Activated naive CD4-positive, alpha-beta T cell treated with anti-CD3 and anti-CD28 coated beads for 36 hours (primary cell): ENCODE measurements at regions of chr14 and their contacts with region 1.

Region 1: GRCh38 chr14:89303457-89304435 is 113.3 kb downstream of the FOXN3 start:
- DNase-seq: peak; percentile 61
- H3K4me3 Mint-ChIP-seq: peak overlapping the region; percentile 62
- H3K27ac Mint-ChIP-seq: peak overlapping the region; percentile 92
- H3K4me1 Mint-ChIP-seq: peaks cover 67% of the 10 kb centered on the region
- H3K27me3 Mint-ChIP-seq: no peaks in the 10 kb centered on the region

Region 2: DNA sequence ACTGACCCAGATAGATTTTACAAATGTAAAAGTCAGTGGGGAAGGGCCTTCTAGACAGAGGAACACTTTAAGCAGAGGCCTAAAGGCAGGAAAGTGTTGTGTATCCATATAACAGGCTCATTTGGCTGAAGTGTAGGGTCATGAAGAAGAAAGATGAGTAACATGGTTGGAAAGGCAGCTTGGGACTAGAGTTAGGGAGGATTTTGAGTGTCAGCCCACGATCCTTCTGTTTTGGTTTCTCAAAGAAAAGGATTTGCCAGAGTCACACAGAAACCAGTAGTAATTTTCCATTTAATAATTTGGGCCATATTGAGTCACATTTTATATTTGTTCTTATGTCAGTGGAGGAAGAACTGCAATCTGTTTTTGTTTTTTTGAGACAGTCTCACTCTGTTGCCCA is 664.5 kb before region 1 on chr14:
- CTCF ChIA-PET with region 1: no interaction called
- intact Hi-C with region 1: no loop called
- DNase-seq: no peak
- H3K4me3 Mint-ChIP-seq: no peak overlapping the region
- H3K27ac Mint-ChIP-seq: no peak overlapping the region
- H3K4me1 Mint-ChIP-seq: no peaks in the 10 kb centered on the region
- H3K27me3 Mint-ChIP-seq: no peaks in the 10 kb centered on the region

Region 3: GRCh38 chr14:89264196-89264800 is 39.4 kb before region 1 on chr14:
- CTCF ChIA-PET with region 1: no interaction called
- intact Hi-C with region 1: loop called (anchors 5 kb)
- DNase-seq: peak; percentile 41
- H3K4me3 Mint-ChIP-seq: no peak overlapping the region
- H3K27ac Mint-ChIP-seq: peak overlapping the region; percentile 68
- H3K4me1 Mint-ChIP-seq: peaks cover 28% of the 10 kb centered on the region
- H3K27me3 Mint-ChIP-seq: no peaks in the 10 kb centered on the region

Region 4: GRCh38 chr14:89317051-89317691 is 13.4 kb after region 1 on chr14:
- CTCF ChIA-PET with region 1: no interaction called
- intact Hi-C with region 1: loop called (anchors 1 kb)
- DNase-seq: no peak
- H3K4me3 Mint-ChIP-seq: no peak overlapping the region
- H3K27ac Mint-ChIP-seq: no peak overlapping the region
- H3K4me1 Mint-ChIP-seq: peaks cover 47% of the 10 kb centered on the region
- H3K27me3 Mint-ChIP-seq: no peaks in the 10 kb centered on the region

Region 5: GRCh38 chr14:89351516-89352404 is 48.0 kb after region 1 on chr14:
- CTCF ChIA-PET with region 1: no interaction called
- intact Hi-C with region 1: loop called (anchors 5 kb)
- DNase-seq: peak; percentile 50
- H3K4me3 Mint-ChIP-seq: peak overlapping the region; percentile 31
- H3K27ac Mint-ChIP-seq: peak overlapping the region; percentile 93
- H3K4me1 Mint-ChIP-seq: peaks cover 51% of the 10 kb centered on the region
- H3K27me3 Mint-ChIP-seq: no peaks in the 10 kb centered on the region